Activated naive CD4-positive, alpha-beta T cell treated with anti-CD3 and anti-CD28 coated beads for 36 hours (primary cell): ENCODE measurements at regions of chr3 and their contacts with region 1.

Region 1: GRCh38 chr3:30347679-30348216 is 258.7 kb upstream of the TGFBR2 start:
- DNase-seq: peak; percentile 73
- H3K4me3 Mint-ChIP-seq: peak overlapping the region; percentile 8
- H3K27ac Mint-ChIP-seq: peak overlapping the region; percentile 80
- H3K4me1 Mint-ChIP-seq: peaks cover 89% of the 10 kb centered on the region
- H3K27me3 Mint-ChIP-seq: no peaks in the 10 kb centered on the region

Region 2: GRCh38 chr3:28348629-28349483 is 1998.9 kb before region 1 on chr3 and contains the starts of genes AZI2 and ZCWPW2:
- CTCF ChIA-PET with region 1: no interaction called
- intact Hi-C with region 1: loop called (anchors 10 kb)
- DNase-seq: peak; percentile 93
- H3K4me3 Mint-ChIP-seq: peak within 1 kb of the TSS; percentile 88
- H3K27ac Mint-ChIP-seq: peak within 1 kb of the TSS; percentile 92
- H3K4me1 Mint-ChIP-seq: peaks cover 36% of the 10 kb centered on the region
- H3K27me3 Mint-ChIP-seq: no peaks in the 10 kb centered on the region
- total RNA-seq, gene AZI2: 31.5 to 39.4 TPM
- total RNA-seq, gene ZCWPW2: 0.17 TPM in 1 of 2 experiments, not detected in the other

Region 3: GRCh38 chr3:29453284-29454001 is 894.3 kb before region 1 on chr3:
- CTCF ChIA-PET with region 1: no interaction called
- intact Hi-C with region 1: no loop called
- DNase-seq: no peak
- H3K4me3 Mint-ChIP-seq: no peak overlapping the region
- H3K27ac Mint-ChIP-seq: no peak overlapping the region
- H3K4me1 Mint-ChIP-seq: no peaks in the 10 kb centered on the region
- H3K27me3 Mint-ChIP-seq: no peaks in the 10 kb centered on the region

Region 4: DNA sequence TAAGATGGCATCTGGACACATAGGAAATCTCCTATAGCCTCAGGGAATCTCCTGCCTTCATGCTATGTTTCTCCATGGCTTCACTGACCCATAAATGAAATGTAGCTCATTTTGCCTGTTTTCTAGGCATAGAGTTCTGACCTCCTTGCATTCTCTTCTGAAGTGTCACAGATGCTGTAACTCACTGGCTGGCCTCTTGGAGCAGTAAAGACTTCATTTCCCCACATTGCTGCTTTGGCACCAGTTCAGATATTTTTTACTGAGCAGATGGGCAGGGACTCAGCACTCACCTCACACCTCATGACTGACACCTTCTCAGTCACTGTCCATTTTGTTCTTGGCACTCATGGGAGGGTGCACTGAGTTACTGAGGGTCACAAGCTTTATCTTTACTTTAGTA is 28.0 kb before region 1 on chr3:
- CTCF ChIA-PET with region 1: interaction called, 7 read pairs
- intact Hi-C with region 1: loop called (anchors 1 kb)
- DNase-seq: peak; percentile 67
- H3K4me3 Mint-ChIP-seq: no peak overlapping the region
- H3K27ac Mint-ChIP-seq: peak overlapping the region; percentile 26
- H3K4me1 Mint-ChIP-seq: peaks cover 21% of the 10 kb centered on the region
- H3K27me3 Mint-ChIP-seq: no peaks in the 10 kb centered on the region

Region 5: DNA sequence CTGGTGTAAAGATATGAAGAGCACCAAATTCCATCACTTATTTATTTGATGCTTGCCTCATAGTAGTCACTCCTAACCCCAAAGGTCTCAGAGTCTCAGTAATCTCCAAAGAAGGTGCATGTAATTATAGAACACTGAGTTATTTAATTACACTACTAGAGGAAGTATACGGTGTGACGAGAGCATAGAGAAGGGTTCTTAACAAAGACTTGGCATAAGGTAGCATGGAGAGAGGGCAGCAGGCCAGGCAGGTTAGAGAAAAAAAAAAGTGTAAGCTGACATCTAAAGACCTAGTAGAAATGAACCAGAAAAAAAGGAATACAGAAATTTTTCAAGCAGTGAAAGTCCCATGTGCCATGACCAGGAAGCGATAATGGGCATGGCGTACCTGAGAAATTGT is 45.3 kb after region 1 on chr3:
- CTCF ChIA-PET with region 1: no interaction called
- intact Hi-C with region 1: no loop called
- DNase-seq: no peak
- H3K4me3 Mint-ChIP-seq: no peak overlapping the region
- H3K27ac Mint-ChIP-seq: no peak overlapping the region
- H3K4me1 Mint-ChIP-seq: no peaks in the 10 kb centered on the region
- H3K27me3 Mint-ChIP-seq: no peaks in the 10 kb centered on the region

Region 6: GRCh38 chr3:30502742-30503073 is 155.0 kb after region 1 on chr3:
- CTCF ChIA-PET with region 1: no interaction called
- intact Hi-C with region 1: loop called (anchors 2 kb)
- DNase-seq: no peak
- H3K4me3 Mint-ChIP-seq: no peak overlapping the region
- H3K27ac Mint-ChIP-seq: peak overlapping the region; percentile 43
- H3K4me1 Mint-ChIP-seq: peaks cover 30% of the 10 kb centered on the region
- H3K27me3 Mint-ChIP-seq: no peaks in the 10 kb centered on the region

Region 7: DNA sequence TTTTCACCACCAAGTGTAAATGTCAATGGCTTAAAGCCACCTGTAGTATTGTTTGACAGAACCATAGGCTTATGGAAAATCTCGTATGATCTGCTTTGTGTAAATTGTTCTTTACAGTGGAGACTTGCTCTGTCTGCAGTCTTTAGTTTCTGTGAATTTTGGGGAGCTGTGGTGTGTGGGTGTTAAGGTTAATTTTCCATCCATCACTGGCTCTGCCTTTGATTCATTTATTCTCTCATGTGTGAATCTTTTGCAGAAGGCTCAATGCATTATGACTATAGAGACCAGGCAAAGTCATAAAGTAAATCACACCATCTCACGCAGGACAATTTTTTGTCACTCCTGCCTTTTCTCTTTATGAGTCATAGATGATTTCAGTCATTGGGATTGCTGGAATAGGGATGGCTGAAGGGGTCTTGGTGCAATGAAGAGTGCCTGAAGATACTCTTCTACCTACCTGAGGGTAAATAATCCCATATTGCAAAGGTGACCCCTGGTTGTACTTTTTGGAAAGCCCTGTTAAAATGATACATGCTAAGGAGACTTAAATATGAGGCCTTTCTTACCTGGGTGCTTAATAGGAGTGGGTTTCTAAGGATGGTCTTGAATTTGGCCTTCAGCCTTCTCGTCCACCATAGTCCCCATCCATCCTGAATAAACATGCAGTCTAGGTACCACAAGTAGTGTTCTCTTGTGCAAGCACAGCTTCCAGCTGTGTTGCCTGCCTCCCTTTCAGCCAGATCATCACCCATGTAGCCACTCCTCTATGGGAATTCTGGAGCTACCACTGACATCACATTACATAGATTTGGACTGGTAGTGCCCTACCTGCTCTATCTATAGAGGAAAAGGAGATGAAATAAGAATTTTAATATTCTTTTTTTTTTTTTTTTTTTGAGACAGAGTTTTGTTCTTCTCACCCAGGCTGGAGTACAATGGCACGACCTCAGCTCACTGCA is 272.9 kb after region 1 on chr3:
- CTCF ChIA-PET with region 1: interaction called, 4 read pairs
- intact Hi-C with region 1: loop called (anchors 2 kb)
- DNase-seq: peak; percentile 73
- H3K4me3 Mint-ChIP-seq: peak overlapping the region; percentile 58
- H3K27ac Mint-ChIP-seq: peak overlapping the region; percentile 98
- H3K4me1 Mint-ChIP-seq: peaks cover 89% of the 10 kb centered on the region
- H3K27me3 Mint-ChIP-seq: no peaks in the 10 kb centered on the region

Region 8: DNA sequence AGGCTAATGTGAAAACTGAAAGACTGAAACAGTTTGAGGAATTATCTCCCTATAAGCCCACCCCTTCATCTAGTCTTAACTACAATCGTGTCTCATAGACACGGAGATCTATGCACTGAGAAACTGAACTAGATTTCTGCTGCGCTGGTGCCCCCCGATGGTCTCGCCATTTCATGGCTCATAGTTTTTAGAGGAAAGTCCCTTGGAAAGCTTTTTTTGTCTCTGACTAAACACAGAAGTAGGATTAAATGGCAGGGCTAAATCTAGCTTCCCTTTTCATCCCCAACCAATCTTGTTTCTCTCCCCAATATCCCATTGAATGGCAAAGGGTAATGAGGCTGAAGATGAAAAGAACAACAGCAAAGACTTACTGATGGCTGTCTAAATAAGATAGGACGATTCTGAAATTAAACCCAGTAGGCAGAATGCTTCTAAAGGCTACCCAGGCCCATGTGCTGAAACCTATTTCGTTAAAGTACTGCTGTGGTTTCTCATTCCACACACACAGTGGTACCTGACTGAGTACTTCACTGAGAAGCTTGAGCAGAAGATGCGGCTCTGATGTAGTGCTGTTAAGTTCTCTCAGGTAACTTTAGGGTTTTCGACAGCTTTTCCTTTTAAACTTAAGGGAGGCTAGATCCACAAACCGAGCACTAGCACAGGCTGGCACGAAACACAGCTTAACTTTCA is 404.0 kb after region 1 on chr3:
- CTCF ChIA-PET with region 1: interaction called, 4 read pairs
- intact Hi-C with region 1: loop called (anchors 5 kb)
- DNase-seq: peak; percentile 88
- H3K4me3 Mint-ChIP-seq: no peak overlapping the region
- H3K27ac Mint-ChIP-seq: no peak overlapping the region
- H3K4me1 Mint-ChIP-seq: peaks cover 45% of the 10 kb centered on the region
- H3K27me3 Mint-ChIP-seq: no peaks in the 10 kb centered on the region